Psoas muscle (tissue), 8 donors: ENCODE measurements at regions of chr19 and their contacts with region 1.

Region 1: GRCh38 chr19:18895038-18895823 is 727 bp downstream of the CERS1 start:
- DNase-seq: peak; percentile 57 to 85
- ATAC-seq: peak; percentile 76 to 84 (median 82)
- H3K4me3 ChIP-seq: peak overlapping the region; percentile 66
- H3K27ac ChIP-seq: peak overlapping the region; percentile 50
- H3K4me1 ChIP-seq: peaks cover 14% of the 10 kb centered on the region
- H3K27me3 ChIP-seq: no peaks in the 10 kb centered on the region
- CTCF ChIP-seq: peak; percentile 52

Region 2: GRCh38 chr19:18675779-18676178 is 219.5 kb before region 1 on chr19:
- intact Hi-C with region 1: no loop called
- DNase-seq: no peak
- ATAC-seq: no peak
- H3K4me3 ChIP-seq: no peak overlapping the region
- H3K27ac ChIP-seq: no peak overlapping the region
- H3K4me1 ChIP-seq: peaks cover 60% of the 10 kb centered on the region
- H3K27me3 ChIP-seq: no peaks in the 10 kb centered on the region
- CTCF ChIP-seq: peak; percentile 36

Region 3: GRCh38 chr19:18985257-18985656 is 90.0 kb after region 1 on chr19:
- intact Hi-C with region 1: loop called in 1 of 2 experiments (anchors 5 kb)
- DNase-seq: no peak
- ATAC-seq: no peak
- H3K4me3 ChIP-seq: no peak overlapping the region
- H3K27ac ChIP-seq: peak overlapping the region; percentile 9
- H3K4me1 ChIP-seq: no peaks in the 10 kb centered on the region
- H3K27me3 ChIP-seq: peaks cover 0 to 10% (median 2%) of the 10 kb centered on the region in 3 donors
- CTCF ChIP-seq: no peak